ENCODE measurements at regions of chr10 and their contacts with region 1.

Region 1: DNA sequence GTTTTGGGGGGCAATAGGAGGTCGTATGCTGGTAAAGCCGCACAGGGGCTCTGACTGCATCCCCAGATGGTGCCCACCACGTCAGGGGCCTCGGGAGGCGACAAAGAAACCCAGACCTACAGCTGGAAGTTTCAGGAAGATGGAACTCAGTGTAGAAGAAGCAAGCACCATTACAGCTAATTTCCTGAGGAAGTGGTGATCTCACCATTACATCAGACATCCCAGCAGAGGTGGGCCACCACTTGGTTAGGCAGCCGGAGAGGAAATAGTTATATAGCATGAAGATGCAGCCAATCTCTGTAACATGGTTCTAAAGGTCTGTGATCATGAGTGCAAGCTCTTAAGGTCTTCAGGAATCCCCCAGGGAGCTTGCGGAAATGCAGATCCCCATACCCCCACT is 127.3 kb upstream of the PCBD1 start:
- DNase-seq: no peak
- H3K4me3 ChIP-seq: no peak overlapping the region
- H3K27ac ChIP-seq: no peak overlapping the region
- H3K4me1 ChIP-seq: no peaks in the 10 kb centered on the region
- H3K27me3 ChIP-seq: no peaks in the 10 kb centered on the region
- CTCF ChIP-seq: no peak
- EP300 ChIP-seq: no peak
- POLR2A ChIP-seq: no peak

Region 2: DNA sequence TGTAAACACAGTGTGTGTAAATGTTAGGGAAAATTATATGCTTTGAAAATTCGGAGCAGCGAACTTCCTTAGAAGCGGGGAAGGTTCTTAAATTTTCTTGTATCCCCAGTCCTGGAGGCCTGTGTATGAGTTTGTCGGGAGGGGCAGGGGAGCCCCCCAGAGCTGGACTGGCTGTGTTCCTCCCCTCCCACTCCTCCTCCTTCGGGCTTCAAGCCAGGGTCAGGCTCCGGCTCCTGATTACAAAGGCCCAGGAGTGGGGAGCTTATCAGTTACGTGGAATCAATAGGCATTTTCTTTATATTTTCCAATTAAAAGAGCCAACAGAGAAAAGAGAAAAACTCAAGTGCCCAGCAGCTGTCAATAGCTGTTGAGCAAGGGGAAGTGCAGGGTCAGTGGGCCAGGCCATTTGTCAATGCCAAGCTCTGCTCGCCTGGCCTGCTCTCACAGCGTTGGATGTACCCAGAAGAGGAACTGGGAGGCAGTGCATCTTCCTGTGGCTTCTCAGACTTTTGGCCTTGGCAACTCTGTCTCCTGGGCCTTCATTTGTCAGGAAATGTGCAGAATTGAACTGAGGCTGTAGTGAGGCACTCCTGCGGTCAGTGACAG is 29.6 kb after region 1 on chr10:
- in situ Hi-C with region 1: no loop called
- intact Hi-C with region 1: loop called (anchors 1 kb)
- DNase-seq: no peak
- H3K4me3 ChIP-seq: no peak overlapping the region
- H3K27ac ChIP-seq: no peak overlapping the region
- H3K4me1 ChIP-seq: no peaks in the 10 kb centered on the region
- H3K27me3 ChIP-seq: no peaks in the 10 kb centered on the region
- CTCF ChIP-seq: no peak
- EP300 ChIP-seq: no peak
- POLR2A ChIP-seq: no peak